ENCODE measurements at regions of chr2 and their contacts with region 1.

Region 1: DNA sequence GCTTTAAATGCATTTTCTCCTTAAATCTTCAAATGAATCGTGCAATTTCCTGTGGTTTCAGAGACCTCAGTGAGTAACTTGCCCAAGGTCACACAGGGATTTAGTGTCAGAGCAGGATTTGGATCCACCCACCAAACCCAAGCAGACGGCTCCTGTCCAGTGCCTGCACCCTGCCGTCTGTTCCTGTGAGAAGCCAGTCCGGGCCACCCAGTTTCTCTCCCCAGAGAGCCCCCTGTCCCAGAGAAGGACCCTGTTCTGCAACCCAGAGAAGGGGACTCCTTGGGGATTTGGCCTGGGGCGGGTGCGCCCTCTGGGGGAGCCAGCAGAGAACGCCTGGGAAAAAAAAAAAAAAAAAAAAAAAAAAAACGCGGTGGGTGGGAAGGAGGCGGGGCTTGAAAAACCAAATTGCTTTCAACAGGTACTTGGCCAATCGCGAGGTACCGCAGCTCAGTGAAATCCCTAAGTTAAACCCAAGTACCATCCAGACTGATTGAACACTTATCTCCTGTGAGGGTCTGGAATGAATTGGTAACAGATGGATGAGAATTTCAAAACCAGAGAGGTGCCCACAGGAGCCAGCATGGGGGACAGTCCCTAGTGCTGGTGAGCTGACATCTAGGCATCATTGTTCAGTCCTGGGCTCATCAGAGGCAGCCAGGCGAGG is 30.9 kb upstream of the REEP1 start:
- DNase-seq: peak; percentile 43
- ATAC-seq: peak; percentile 69
- H3K4me3 ChIP-seq: no peak overlapping the region; a peak in 1 of 6 replicates
- H3K27ac ChIP-seq: no peak overlapping the region
- H3K4me1 ChIP-seq: peaks cover 19% of the 10 kb centered on the region
- H3K27me3 ChIP-seq: no peaks in the 10 kb centered on the region
- CTCF ChIP-seq: peak; percentile 72
- EP300 ChIP-seq: no peak
- POLR2A ChIP-seq: no peak
- RAD21 ChIP-seq: peak; percentile 62

Region 2: DNA sequence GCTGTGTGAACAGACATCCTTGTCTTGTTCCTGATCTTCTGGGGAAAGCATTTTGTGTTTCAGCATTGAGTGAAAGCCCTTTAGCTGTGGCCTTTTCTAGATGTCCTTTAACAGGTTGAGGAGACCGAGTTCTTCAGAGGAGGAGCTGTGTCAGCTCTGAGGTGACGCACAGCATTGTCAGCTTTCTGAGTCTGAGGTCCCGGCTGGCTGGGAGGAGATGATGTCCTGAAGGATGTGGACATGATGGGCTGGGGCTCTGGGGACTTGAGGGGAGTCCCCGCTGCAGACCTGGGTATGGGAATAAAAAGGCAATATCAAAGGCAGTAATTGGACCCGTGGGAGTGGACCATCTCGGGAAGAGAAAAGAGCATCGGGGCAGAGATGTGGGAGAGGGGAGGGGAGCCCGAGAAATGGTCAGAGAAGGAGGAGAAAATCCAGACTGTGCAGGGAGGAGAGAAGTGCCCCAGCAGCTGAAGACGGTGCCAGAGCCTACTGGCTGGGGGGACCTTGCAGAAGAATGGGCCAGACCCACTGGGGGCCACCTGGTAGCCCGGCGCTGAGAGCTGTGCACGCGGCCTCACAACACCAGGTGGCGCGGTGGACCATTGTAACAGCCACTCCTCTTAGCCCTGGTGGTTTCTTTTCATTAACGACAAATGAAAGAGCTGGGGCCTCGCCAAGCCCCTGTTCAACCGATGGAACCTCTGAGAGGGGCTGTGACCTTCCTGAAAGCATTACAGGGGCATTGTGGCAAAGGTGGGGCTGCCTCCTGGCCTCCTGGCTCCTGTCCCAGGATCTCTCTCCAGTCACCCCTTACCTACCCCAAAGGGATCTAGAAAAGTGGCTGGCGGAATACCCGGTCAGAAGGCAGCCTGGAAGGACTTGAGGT is 541.1 kb before region 1 on chr2:
- CTCF ChIA-PET with region 1: interaction called, 3 read pairs
- POLR2A ChIA-PET with region 1: no interaction called
- in situ Hi-C with region 1: no loop called
- intact Hi-C with region 1: loop called (anchors 5 kb)
- DNase-seq: peak; percentile 48
- ATAC-seq: peak; percentile 99
- H3K4me3 ChIP-seq: peak overlapping the region; percentile 34 to 69 (median 36); a peak in 5 of 6 replicates
- H3K27ac ChIP-seq: no peak overlapping the region
- H3K4me1 ChIP-seq: peaks cover 6% of the 10 kb centered on the region; the same call in 1 of the 2 replicates
- H3K27me3 ChIP-seq: peaks cover 3 to 8% of the 10 kb centered on the region in 2 experiments; a peak in 2 of 5 replicates
- CTCF ChIP-seq: peak; percentile 96
- EP300 ChIP-seq: no peak
- POLR2A ChIP-seq: no peak
- RAD21 ChIP-seq: peak; percentile 93

Region 3: DNA sequence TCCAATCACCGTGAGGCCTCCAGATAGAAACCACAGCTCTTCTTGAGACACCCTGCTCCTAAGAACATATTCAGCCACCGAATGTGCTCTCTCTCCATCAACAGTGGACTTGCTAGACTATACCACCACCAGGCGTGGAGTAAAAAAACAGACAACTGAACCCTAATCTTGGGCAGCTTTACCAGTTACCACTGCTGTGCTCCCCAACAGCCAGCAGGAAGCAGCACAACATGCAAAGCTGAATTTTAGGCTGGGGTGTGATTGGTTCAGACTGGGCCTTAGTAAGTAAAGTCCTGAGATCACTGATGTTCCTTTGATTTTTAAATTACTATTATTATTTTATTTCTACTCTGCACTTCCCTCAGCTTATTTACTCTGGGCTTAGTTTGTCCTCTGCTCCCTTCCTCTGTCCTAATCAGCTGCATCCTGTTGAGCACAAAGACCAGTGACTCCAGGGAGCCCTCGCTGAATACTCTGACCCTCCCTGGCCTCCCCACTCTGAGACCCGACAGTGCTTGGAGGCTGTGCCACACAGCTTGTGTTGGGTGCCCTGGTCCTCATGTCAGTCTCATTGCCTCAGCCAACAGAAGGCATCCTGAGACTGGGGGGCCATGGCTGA is 147.1 kb before region 1 on chr2:
- CTCF ChIA-PET with region 1: interaction called, 28 read pairs
- POLR2A ChIA-PET with region 1: no interaction called
- in situ Hi-C with region 1: loop called (anchors 5 kb)
- intact Hi-C with region 1: loop called (anchors 1 kb)
- DNase-seq: peak; percentile 62
- ATAC-seq: peak; percentile 75
- H3K4me3 ChIP-seq: no peak overlapping the region
- H3K27ac ChIP-seq: no peak overlapping the region
- H3K4me1 ChIP-seq: peaks cover 57% of the 10 kb centered on the region
- H3K27me3 ChIP-seq: peaks cover 4 to 11% of the 10 kb centered on the region in 2 experiments; a peak in 2 of 5 replicates
- CTCF ChIP-seq: peak; percentile 92
- EP300 ChIP-seq: no peak
- POLR2A ChIP-seq: no peak
- RAD21 ChIP-seq: peak; percentile 79

Region 4: DNA sequence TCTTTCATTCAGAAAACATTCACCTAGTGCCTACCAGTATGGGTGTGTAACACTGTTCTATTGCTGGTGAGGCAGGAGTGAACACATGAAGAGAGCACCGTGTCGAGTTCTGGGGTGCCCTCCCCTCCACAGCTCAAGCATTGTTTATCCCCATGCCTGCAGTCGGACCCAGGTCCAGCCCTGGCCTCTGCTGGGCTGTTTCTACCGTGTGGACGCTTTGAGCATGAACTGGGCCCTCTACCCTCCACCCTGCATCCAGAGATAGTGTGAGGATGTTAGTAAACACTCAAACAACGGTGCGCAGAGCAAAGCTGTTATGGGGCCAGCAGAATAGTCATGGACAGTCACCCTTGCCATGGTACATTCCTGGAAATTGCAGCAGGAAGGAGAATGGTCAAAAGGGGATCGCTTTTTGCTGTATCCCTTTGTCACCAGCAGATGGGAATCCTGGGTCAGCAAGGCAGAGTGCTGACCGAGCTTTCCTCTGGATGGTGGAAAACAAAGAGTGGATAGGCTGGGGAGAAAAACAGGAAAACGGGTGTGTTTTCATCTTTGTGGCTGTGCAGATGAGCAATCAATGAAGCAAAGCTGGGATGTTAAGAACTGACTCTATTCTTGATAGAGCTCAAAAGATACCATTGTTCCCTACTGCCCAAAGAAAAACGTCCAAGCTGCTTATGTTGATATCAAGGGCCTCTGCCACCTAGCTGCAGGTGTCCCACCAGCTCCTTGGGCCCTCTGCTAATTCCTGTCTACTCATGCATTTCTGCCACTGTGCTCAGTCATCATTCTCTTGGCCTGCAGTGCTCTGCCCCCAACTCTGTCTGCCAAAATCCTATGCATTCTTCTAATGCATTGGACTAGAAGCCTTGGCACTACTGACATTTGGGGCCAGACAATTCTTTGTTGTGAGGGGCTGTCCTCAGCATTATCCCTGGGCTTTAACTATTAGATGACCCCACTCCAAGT is 69.6 kb before region 1 on chr2:
- CTCF ChIA-PET with region 1: interaction called, 3 read pairs
- POLR2A ChIA-PET with region 1: no interaction called
- in situ Hi-C with region 1: no loop called
- intact Hi-C with region 1: loop called (anchors 2 kb)
- DNase-seq: peak; percentile 38
- ATAC-seq: peak; percentile 92
- H3K4me3 ChIP-seq: no peak overlapping the region
- H3K27ac ChIP-seq: no peak overlapping the region
- H3K4me1 ChIP-seq: peaks cover 7% of the 10 kb centered on the region
- H3K27me3 ChIP-seq: peaks cover 3 to 20% of the 10 kb centered on the region in 2 experiments; a peak in 3 of 5 replicates
- CTCF ChIP-seq: peak; percentile 71
- EP300 ChIP-seq: no peak
- POLR2A ChIP-seq: no peak
- RAD21 ChIP-seq: peak; percentile 54

Measured in HepG2 (cell line).